ENCODE measurements at regions of chr19 and their contacts with region 1.

Region 1: DNA sequence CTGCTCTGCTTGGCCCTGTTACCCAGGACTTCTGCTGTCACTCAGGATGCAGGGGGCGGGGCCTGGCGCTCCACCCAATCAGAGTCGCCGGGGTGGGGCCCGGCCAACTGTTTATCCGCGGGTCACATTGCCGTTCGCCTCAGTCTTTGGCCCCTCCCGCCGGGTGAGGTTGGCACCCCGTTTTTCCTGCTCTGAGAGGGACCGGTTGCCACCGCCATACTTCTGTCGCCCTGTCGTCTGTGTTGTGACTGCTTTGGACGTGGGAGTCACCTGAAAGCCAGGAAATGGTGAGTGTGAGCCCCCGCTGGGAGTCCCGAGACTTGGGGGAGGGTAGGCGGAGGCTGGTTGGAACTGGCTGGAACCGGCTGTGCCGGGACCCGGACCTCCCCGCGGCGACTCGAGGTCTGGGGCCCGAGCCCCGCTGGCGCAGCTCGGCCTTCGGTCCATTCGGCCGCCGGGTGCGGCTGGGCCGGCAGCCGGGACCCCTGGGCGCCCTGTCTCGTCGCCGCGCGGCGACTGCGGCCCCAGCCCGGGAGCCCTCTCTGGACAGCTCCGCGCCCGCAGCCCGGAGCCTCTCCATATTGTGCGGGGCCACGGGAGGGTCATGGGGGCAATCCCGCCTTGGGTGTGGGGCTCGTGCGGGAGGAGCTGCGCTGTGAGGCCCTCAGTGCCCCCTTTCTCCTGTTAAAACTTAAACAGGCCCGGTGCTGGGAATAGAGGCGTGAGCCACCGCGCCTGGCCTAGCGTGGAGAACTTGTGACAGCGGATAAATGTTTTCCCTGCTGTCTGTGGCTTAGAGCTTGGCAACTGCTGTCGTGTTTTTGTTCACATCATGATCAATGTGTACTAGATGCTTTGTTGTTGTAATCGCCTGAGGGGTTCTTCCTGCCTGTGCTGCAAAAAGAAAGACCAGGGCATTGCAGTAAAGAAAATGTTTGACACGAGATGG is at the start of gene ZNF844:
- DNase-seq: peak; percentile 75 to 99
- H3K4me3 ChIP-seq: peak within 1 kb of the TSS; percentile 62 to 82 (median 73)
- H3K27ac ChIP-seq: peak within 1 kb of the TSS; percentile 94
- H3K4me1 ChIP-seq: peaks cover 2 to 8% (median 4%) of the 10 kb centered on the region in 4 experiments; a peak in 6 of 7 replicates
- H3K27me3 ChIP-seq: no peaks in the 10 kb centered on the region
- CTCF ChIP-seq: no peak
- EP300 ChIP-seq: peak; percentile 15 to 31; a peak in 2 of 3 replicates
- POLR2A ChIP-seq: peak; percentile 87 to 99
- RAD21 ChIP-seq: no peak
- total RNA-seq, gene ZNF844: 9.4 and 9.8 TPM in 2 replicates

Region 2: DNA sequence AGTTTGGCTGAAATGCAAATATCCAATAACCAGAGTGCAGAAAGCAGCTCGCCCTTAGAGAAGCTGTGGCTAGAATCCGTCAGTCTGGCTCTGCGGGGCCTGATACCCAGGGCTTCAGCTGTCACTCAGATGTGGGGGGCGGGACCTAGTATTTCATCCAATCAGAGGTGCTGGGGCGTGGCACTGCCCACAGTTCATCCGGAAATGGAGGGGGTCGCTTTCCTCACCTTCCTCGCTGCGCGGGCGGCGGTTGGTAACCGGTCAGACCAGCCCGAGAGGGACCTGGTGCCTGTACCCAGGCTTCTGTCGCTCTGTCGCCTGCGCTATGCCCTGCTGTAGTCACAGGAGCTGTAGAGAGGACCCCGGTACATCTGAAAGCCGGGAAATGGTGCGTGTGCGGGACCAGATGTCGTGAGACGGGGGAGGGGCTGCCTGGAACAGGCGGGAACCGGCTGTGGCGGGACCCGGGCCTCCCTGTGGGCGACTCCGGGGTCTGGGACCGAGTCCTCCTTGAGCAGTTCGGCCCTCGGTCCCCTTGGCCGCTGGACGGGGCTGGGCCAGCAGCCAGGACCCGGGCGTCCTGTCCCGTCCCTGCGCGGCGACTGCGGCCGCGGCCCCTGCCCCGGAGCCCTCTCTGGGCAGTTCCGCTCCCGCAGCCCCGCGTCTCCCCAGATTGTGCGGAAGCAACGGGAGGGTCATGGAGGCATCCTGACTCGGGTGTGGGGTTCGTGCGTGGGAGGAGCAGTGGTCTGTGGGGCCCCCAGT is 139.8 kb before region 1 on chr19 and contains the start of gene ZNF700:
- CTCF ChIA-PET with region 1: interaction called, 10 read pairs
- POLR2A ChIA-PET with region 1: no interaction called
- DNase-seq: peak; percentile 56 to 95
- H3K4me3 ChIP-seq: peak within 1 kb of the TSS; percentile 65 to 82 (median 76)
- H3K27ac ChIP-seq: peak within 1 kb of the TSS; percentile 95
- H3K4me1 ChIP-seq: peaks cover 0 to 3% (median 3%) of the 10 kb centered on the region in 4 experiments; a peak in 4 of 7 replicates
- H3K27me3 ChIP-seq: 0 out of 7 replicates have a peak, but pooled peaks cover 0 to 3% (median 0%) of the 10 kb centered on the region in 4 experiments
- CTCF ChIP-seq: no peak
- EP300 ChIP-seq: 0 out of 3 replicates have a peak, but pooled peaks of 1 of the 2 experiments have one; percentile 17
- POLR2A ChIP-seq: peak; percentile 91 to 98
- RAD21 ChIP-seq: no peak
- total RNA-seq, gene ZNF700: 9.4 and 10.5 TPM in 2 replicates

Region 3: GRCh38 chr19:12015753-12016116 is 49.1 kb before region 1 on chr19:
- CTCF ChIA-PET with region 1: no interaction called
- POLR2A ChIA-PET with region 1: no interaction called
- DNase-seq: no peak
- H3K4me3 ChIP-seq: no peak overlapping the region
- H3K27ac ChIP-seq: no peak overlapping the region
- H3K4me1 ChIP-seq: no peaks in the 10 kb centered on the region
- H3K27me3 ChIP-seq: no peaks in the 10 kb centered on the region
- CTCF ChIP-seq: no peak
- EP300 ChIP-seq: no peak
- POLR2A ChIP-seq: no peak
- RAD21 ChIP-seq: no peak

Region 4: DNA sequence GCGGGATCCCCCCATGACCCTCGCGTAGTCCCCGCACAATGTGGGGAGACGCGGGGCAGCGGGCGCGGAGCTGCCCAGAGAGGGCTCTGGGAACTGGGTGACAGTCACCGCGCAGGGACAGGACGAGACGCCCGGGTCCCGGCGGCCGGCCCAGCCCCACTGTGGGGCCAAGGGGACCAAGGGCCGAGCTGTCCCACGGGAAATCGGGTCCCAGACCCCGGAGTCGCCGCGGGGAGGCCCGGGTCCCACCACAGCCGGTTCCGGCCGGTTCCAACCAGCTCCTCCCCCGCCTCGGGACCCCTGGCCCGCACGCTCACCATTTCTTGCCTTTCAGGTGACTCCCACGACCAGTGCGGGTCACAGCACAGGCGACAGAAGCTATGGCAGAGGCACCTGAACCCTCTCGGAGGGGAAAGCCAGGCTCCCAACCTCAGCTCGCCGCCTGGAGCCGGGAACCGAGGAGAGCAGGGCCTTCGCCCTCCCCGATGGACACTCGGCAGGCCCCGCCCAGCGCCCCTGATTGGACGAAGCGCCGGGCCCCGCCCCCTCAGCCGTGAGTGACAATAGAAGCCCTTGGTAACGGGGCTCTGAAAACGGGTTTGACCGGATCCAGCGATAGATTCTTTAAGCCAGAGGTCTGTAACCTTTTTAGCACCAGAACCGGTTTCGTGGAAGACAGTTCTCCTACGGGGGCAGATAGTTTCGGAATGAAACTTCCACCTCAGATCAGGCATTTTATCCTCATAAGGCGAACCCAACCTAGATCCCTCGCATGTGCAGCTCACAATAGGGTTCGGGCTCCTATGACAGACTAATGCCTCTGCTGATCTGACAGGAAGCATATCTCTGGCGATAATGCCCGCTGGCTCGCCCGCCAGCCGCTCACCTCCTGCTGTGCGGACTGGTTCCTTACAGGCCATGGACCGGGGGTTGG is 29.4 kb before region 1 on chr19 and contains the start of gene ZNF433:
- CTCF ChIA-PET with region 1: interaction called, 13 read pairs
- POLR2A ChIA-PET with region 1: interaction called, 3 read pairs
- DNase-seq: peak; percentile 76 to 99
- H3K4me3 ChIP-seq: peak within 1 kb of the TSS; percentile 58 to 81 (median 80)
- H3K27ac ChIP-seq: peak within 1 kb of the TSS; percentile 76; the same call in 1 of the 2 replicates
- H3K4me1 ChIP-seq: peaks cover 0 to 4% (median 2%) of the 10 kb centered on the region in 4 experiments; a peak in 3 of 7 replicates
- H3K27me3 ChIP-seq: peaks cover 0 to 7% (median 2%) of the 10 kb centered on the region in 4 experiments; a peak in 3 of 7 replicates
- CTCF ChIP-seq: peak in 1 of 3 experiments; percentile 11; a peak in 1 of 4 replicates
- EP300 ChIP-seq: peak in 1 of 2 experiments; percentile 69; a peak in 1 of 3 replicates
- POLR2A ChIP-seq: peak in 1 of 2 experiments; percentile 80; a peak in 2 of 3 replicates
- RAD21 ChIP-seq: no peak
- total RNA-seq, gene ZNF433: 1.4 and 1.8 TPM in 2 replicates

Region 5: DNA sequence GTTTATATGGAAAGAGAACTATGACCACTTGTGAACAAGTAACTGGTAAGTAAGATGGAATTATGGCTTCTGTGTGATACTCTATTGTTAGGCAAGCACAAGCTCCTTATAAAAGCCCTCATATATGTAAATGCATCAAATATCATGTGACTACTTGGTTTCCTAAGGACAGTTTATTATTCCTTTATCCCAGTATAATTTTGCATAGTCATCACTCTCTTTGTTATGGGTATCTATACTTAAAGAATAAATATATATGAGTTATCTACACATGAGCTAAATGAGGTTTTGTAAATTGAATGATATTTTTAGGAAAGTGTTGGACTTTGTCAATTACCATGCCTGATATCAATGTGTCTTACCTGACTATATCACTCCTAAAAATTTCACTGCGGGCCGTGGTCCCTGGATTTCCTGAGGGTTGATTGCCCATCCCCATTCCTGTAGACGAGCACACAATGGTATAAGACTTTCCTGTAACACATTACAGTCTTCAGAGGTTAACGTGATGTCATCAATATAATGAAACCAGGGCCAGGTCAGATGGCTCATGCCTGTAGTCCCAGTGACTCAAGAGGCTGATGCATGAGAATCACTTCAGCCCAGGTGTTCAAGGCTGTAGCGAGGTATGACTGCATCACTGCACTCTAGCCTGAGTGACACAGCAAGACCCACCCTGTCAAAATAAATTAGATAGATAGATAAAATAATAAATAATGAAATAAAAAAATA is 20.4 kb after region 1 on chr19:
- CTCF ChIA-PET with region 1: interaction called, 20 read pairs
- POLR2A ChIA-PET with region 1: interaction called, 8 read pairs
- DNase-seq: no peak
- H3K4me3 ChIP-seq: no peak overlapping the region
- H3K27ac ChIP-seq: no peak overlapping the region
- H3K4me1 ChIP-seq: no peaks in the 10 kb centered on the region
- H3K27me3 ChIP-seq: no peaks in the 10 kb centered on the region
- CTCF ChIP-seq: no peak
- EP300 ChIP-seq: no peak
- POLR2A ChIP-seq: no peak
- RAD21 ChIP-seq: no peak

Region 6: DNA sequence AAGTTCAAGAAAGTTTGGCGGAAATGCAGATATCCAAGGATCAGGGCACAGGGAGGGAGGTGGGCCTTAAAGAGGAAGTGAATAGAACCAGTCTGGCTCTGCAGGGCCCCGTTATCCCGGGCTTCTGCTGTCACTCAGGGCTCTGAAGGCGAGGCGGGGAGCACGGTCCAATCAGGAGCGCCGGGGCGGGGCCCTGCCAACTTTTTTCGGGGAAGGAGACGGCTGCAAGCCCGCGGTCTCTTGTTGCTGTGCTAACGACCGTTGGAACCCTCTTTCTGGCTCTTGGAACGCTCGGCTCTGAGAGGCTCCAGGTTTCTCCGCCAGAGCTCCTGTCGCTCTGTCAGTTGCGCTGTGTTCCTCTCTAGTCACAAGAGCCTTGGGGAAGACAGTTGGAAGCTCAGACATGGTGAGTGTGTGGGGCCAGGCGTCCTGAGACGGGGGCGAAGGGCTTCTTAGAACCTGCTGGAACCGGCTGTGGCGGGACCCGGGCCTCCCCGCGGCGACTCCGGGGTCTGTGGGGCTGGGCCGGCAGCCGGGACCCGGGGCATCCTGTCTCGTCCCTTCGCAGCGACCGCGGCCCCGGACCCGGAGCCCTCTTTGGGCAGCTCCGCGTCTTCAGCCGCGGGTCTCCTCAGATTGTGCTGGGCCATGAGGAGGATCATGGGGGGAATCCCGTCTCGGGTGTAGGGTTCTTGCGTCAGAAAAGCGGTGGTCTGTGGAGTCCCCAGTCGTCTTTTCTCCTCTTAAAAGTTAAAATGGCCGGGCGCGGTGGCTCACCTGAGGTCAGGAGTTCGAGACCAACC is 27.4 kb after region 1 on chr19:
- CTCF ChIA-PET with region 1: interaction called, 20 read pairs
- POLR2A ChIA-PET with region 1: interaction called, 16 read pairs
- DNase-seq: peak; percentile 81 to 93
- H3K4me3 ChIP-seq: peak overlapping the region; percentile 62 to 93 (median 76)
- H3K27ac ChIP-seq: peak overlapping the region; percentile 90
- H3K4me1 ChIP-seq: no peaks in the 10 kb centered on the region; a peak in 1 of 7 replicates
- H3K27me3 ChIP-seq: no peaks in the 10 kb centered on the region
- CTCF ChIP-seq: no peak
- EP300 ChIP-seq: no peak
- POLR2A ChIP-seq: peak; percentile 74 to 95
- RAD21 ChIP-seq: no peak

Region 7: GRCh38 chr19:12126707-12127106 is 61.8 kb after region 1 on chr19:
- CTCF ChIA-PET with region 1: interaction called, 25 read pairs
- POLR2A ChIA-PET with region 1: interaction called, 3 read pairs
- DNase-seq: peak in 1 of 2 experiments; percentile 54
- H3K4me3 ChIP-seq: no peak overlapping the region
- H3K27ac ChIP-seq: no peak overlapping the region
- H3K4me1 ChIP-seq: no peaks in the 10 kb centered on the region
- H3K27me3 ChIP-seq: no peaks in the 10 kb centered on the region
- CTCF ChIP-seq: peak in 2 of 3 experiments; percentile 45 to 68; a peak in 2 of 4 replicates
- EP300 ChIP-seq: no peak
- POLR2A ChIP-seq: no peak
- RAD21 ChIP-seq: peak; percentile 19 to 39

Region 8: GRCh38 chr19:12162882-12163806 is 98.3 kb after region 1 on chr19 and contains the start of gene ZNF136:
- CTCF ChIA-PET with region 1: no interaction called
- POLR2A ChIA-PET with region 1: no interaction called
- DNase-seq: peak; percentile 79 to 93
- H3K4me3 ChIP-seq: peak within 1 kb of the TSS; percentile 87 to 97 (median 94)
- H3K27ac ChIP-seq: peak within 1 kb of the TSS; percentile 74
- H3K4me1 ChIP-seq: peaks cover 0 to 3% (median 1%) of the 10 kb centered on the region in 4 experiments; a peak in 2 of 7 replicates
- H3K27me3 ChIP-seq: no peaks in the 10 kb centered on the region
- CTCF ChIP-seq: no peak
- EP300 ChIP-seq: no peak
- POLR2A ChIP-seq: peak; percentile 45 to 80
- RAD21 ChIP-seq: no peak; a peak in 1 of 4 replicates
- total RNA-seq, gene ZNF136: 6.9 and 9.9 TPM in 2 replicates

Measured in H1 (cell line).